ENCODE measurements at regions of chr1 and their contacts with region 1.

Region 1: GRCh38 chr1:165768513-165769394 is at the start of gene TMCO1:
- DNase-seq: peak; percentile 97
- H3K4me3 ChIP-seq: peak within 1 kb of the TSS; percentile 88
- H3K27ac ChIP-seq: peak within 1 kb of the TSS; percentile 94
- H3K27me3 ChIP-seq: no peaks in the 10 kb centered on the region
- CTCF ChIP-seq: peak; percentile 36
- polyA plus RNA-seq, gene TMCO1: 188 and 200 TPM in 2 replicates

Region 2: DNA sequence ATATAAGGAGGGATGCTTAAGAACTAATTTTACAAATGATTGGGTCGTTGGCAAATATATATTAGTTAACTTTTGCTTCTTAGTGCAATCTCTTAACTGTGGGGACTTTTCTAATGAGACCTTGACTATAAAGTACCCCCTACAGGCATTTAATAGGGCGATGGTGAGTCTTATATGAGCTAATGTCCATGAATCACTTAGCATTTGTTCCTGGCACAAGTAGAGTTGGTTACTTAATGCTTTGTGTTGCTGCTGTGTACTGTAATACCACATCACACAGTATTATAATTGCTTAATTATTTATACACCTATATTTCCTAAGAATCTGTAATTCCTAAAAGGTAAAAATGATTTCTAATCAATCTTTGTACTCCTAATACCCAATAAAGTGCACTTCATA is 25.2 kb after region 1 on chr1:
- CTCF ChIA-PET with region 1: no interaction called
- POLR2A ChIA-PET with region 1: no interaction called
- DNase-seq: no peak
- H3K4me3 ChIP-seq: no peak overlapping the region
- H3K27ac ChIP-seq: no peak overlapping the region
- H3K27me3 ChIP-seq: peaks cover 2% of the 10 kb centered on the region
- CTCF ChIP-seq: no peak

Region 3: GRCh38 chr1:165898837-165899236 is 130.1 kb after region 1 on chr1:
- CTCF ChIA-PET with region 1: no interaction called
- POLR2A ChIA-PET with region 1: interaction called, 19 read pairs
- DNase-seq: peak; percentile 98
- H3K4me3 ChIP-seq: no peak overlapping the region
- H3K27ac ChIP-seq: peak overlapping the region; percentile 100
- H3K27me3 ChIP-seq: no peaks in the 10 kb centered on the region
- CTCF ChIP-seq: 0 out of 2 replicates have a peak, but pooled peaks have one; percentile 1